Activated CD4-positive, alpha-beta T cell treated with anti-CD3 and anti-CD28 coated beads, Interleukin-2, amount 10 ng/mL, durations not matched to agents 24 days and 14 days (primary cell): ENCODE measurements at regions of chr1 and their contacts with region 1.

Region 1: DNA sequence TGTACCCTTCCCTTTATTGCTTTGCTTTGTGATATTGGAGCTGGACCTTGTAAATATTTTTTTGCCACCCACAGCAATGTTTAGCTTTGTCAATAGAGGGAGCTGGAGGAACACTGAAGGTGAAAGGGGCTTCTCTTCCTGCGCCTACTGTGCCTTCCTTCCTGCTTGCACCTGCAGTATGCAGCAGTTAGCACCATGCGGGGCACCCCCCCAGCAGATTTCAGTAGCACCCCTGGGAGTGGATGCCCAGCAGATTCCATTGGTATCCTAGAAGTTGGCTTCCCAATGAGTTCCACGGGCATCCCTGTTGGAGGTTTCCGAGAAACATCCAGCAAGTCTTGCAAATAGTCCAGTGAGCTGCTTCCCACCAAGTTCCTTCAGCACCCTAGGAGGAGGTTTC is 25.6 kb downstream of the S100A10 start:
- DNase-seq: peak; percentile 89
- H3K4me3 Mint-ChIP-seq: no peak overlapping the region
- H3K27ac Mint-ChIP-seq: no peak overlapping the region
- H3K4me1 Mint-ChIP-seq: peaks cover 23% of the 10 kb centered on the region
- H3K27me3 Mint-ChIP-seq: peaks cover 25% of the 10 kb centered on the region

Region 2: GRCh38 chr1:151934048-151934493 is 34.0 kb before region 1 on chr1:
- intact Hi-C with region 1: loop called (anchors 5 kb)
- DNase-seq: peak; percentile 87
- H3K4me3 Mint-ChIP-seq: no peak overlapping the region
- H3K27ac Mint-ChIP-seq: no peak overlapping the region
- H3K4me1 Mint-ChIP-seq: peaks cover 5% of the 10 kb centered on the region
- H3K27me3 Mint-ChIP-seq: peaks cover 17% of the 10 kb centered on the region

Region 3: DNA sequence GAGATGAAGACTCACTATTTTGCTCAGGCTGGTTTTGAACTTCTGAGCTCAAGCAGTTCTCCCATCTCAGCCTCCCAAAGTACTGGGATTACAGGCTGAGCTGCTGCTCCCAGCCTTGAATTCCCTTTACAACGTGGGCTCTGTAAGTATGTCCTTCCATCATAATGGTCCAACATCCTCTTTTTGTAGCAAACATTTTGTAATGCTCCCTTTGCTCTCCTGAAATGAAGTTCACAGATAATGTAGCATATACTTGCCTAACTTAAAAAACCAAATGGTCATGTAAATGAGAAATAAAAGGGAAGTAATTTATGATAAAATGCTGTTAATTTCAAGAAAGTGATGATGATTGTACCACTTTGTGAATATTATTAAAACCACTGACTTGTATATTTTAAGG is 28.3 kb before region 1 on chr1:
- intact Hi-C with region 1: loop called (anchors 2 kb)
- DNase-seq: no peak
- H3K4me3 Mint-ChIP-seq: no peak overlapping the region
- H3K27ac Mint-ChIP-seq: no peak overlapping the region
- H3K4me1 Mint-ChIP-seq: peaks cover 10% of the 10 kb centered on the region
- H3K27me3 Mint-ChIP-seq: peaks cover 10% of the 10 kb centered on the region

Region 4: DNA sequence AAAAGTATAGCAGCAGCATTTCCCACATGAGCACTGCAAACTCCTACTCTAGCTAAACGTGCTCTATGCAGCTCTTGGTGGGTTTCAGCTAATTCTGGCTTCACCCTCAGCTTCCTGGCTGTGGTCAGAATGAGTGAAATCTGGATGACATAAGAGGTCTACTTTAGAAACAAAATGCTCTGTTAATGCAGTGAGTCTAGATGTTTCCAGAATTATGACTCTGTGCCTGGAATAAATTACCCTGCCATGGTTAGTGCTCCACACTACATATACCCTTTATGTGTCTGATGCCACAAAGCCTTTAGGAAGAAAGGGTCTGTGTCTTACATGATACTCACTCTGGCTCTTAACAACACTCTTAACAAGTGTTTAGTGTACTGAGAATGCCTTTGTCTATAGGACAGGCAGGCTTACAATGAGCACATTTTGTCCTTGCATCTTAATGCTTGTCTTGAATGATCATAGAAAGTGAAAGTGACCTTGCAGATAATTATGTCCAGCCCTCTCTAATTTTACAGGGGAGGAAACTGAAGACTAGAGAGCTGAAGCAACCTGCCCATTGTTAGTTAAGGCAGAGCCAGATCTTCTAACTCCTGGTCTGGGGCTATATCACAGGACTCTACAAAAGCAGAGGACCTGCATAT is 16.4 kb after region 1 on chr1:
- intact Hi-C with region 1: loop called (anchors 1 kb)
- DNase-seq: peak; percentile 81
- H3K4me3 Mint-ChIP-seq: peak overlapping the region; percentile 78
- H3K27ac Mint-ChIP-seq: peak overlapping the region; percentile 92
- H3K4me1 Mint-ChIP-seq: peaks cover 53% of the 10 kb centered on the region
- H3K27me3 Mint-ChIP-seq: no peaks in the 10 kb centered on the region

Region 5: GRCh38 chr1:151993654-151994496 is 25.8 kb after region 1 on chr1 and contains the start of gene S100A10:
- intact Hi-C with region 1: loop called (anchors 1 kb)
- DNase-seq: peak; percentile 94
- H3K4me3 Mint-ChIP-seq: peak within 1 kb of the TSS; percentile 93
- H3K27ac Mint-ChIP-seq: peak within 1 kb of the TSS; percentile 98
- H3K4me1 Mint-ChIP-seq: peaks cover 49% of the 10 kb centered on the region
- H3K27me3 Mint-ChIP-seq: peaks cover 8% of the 10 kb centered on the region
- total RNA-seq, gene S100A10: 103 and 107 TPM in 2 replicates

Region 6: DNA sequence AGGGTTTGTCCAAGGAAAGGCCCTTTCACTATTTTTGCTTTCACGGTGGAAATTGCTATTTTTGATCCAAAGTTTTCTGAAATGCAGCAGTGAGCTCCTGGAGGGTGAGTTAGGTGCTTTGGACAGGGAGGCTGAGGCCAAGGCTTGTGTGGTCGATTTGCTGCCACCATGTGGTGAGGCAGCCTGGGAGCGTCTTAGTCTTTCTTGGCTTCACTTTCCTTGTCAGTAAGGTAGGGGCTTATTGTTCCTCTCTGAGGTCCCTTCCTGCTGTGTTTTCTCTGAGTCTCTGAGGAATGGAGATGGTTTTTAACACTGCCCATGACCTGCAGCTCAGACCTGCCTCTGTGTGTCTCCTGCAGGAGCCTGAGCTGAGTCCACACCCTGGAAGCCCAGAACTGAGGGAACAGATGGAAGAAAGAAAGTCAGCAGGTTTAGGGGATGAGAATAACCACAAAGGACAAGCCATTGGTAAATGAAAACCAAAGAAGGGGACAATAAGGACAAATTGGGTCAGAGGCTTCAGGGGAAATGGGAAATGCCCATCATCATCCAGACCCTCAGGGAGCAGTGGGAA is 45.7 kb after region 1 on chr1:
- intact Hi-C with region 1: loop called (anchors 1 kb)
- DNase-seq: peak; percentile 84
- H3K4me3 Mint-ChIP-seq: no peak overlapping the region
- H3K27ac Mint-ChIP-seq: no peak overlapping the region
- H3K4me1 Mint-ChIP-seq: peaks cover 2% of the 10 kb centered on the region
- H3K27me3 Mint-ChIP-seq: peaks cover 49% of the 10 kb centered on the region